Tibial artery (tissue), 4 donors: ENCODE measurements at regions of chr4 and their contacts with region 1.

Region 1: GRCh38 chr4:173415885-173416653 is 17.2 kb upstream of the SCRG1 start:
- DNase-seq: peak; percentile 62 to 81
- H3K4me3 ChIP-seq: no peak overlapping the region
- H3K27ac ChIP-seq: no peak overlapping the region
- H3K4me1 ChIP-seq: peaks cover 0 to 4% (median 0%) of the 10 kb centered on the region in 4 donors
- H3K27me3 ChIP-seq: no peaks in the 10 kb centered on the region
- CTCF ChIP-seq: no peak

Region 2: DNA sequence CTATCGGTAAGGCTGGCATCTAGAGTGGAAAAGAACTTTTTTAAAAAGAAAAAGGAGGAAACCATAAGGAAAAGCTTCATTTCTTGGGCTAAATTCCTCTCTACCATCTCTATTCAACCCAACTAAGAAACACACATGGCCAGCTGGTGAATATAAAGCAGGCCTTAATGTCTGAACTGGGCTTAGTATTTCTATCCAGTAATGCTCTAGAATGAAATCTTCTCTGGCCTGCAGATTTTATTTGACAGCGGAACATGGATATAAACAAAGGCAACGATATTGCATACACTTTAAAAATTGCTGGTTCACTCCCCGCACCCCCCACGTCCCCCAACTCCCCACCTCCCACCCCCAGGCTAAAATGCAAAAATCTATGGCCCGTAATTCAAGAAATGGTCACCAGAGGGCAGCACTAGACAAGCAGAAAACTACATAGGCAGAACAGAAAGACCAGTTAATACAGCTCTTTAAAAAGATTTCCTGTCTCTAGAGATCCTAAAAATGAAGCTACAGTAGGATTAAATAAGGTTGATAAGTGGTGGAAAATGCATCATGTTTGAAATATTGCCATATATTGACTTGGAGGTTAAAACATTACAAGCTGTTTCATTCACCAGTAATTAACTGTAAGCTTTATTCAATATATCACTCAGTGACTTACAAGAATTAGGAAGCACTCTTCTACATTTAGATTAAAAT is 402.7 kb before region 1 on chr4:
- intact Hi-C with region 1: loop called (anchors 10 kb)
- DNase-seq: peak in 1 of 2 donors; percentile 31
- H3K4me3 ChIP-seq: no peak overlapping the region
- H3K27ac ChIP-seq: no peak overlapping the region
- H3K4me1 ChIP-seq: peaks cover 0 to 13% (median 0%) of the 10 kb centered on the region in 4 donors
- H3K27me3 ChIP-seq: no peaks in the 10 kb centered on the region
- CTCF ChIP-seq: peak; percentile 53 to 77

Region 3: DNA sequence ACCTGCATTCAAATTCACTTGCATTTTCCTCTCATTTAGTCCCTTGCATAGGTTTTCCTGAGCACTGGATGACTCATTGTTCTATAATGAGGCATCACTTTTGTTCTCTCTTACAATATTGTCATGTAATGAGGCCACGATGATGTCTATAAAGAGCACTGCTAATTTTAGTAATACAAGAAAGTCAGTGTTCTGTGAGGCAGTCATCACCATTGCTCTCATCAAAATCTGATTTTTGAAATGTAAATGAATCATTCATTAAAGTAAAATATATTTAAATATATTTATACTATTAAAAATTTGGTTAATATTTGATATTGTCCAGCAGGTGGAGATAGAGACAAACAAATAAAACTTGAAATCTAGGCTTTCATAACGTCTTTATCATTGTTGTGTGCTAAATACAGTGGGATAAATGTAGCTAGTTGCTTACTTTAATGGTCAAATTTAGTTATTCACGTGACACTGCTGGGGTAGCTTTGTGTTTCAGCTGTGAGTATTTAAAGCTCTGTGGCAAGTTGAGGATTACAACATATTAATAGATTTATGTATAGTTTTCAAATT is 97.3 kb before region 1 on chr4:
- intact Hi-C with region 1: loop called (anchors 2 kb)
- DNase-seq: no peak
- H3K4me3 ChIP-seq: no peak overlapping the region
- H3K27ac ChIP-seq: no peak overlapping the region
- H3K4me1 ChIP-seq: no peaks in the 10 kb centered on the region
- H3K27me3 ChIP-seq: no peaks in the 10 kb centered on the region
- CTCF ChIP-seq: peak; percentile 37 to 44